Activated CD8-positive, alpha-beta memory T cell treated with anti-CD3 and anti-CD28 coated beads, Interleukin-2, amount 10 ng/mL, durations not matched to agents 7 days and 5 days (primary cell): ENCODE measurements at regions of chr19 and their contacts with region 1.

Region 1: DNA sequence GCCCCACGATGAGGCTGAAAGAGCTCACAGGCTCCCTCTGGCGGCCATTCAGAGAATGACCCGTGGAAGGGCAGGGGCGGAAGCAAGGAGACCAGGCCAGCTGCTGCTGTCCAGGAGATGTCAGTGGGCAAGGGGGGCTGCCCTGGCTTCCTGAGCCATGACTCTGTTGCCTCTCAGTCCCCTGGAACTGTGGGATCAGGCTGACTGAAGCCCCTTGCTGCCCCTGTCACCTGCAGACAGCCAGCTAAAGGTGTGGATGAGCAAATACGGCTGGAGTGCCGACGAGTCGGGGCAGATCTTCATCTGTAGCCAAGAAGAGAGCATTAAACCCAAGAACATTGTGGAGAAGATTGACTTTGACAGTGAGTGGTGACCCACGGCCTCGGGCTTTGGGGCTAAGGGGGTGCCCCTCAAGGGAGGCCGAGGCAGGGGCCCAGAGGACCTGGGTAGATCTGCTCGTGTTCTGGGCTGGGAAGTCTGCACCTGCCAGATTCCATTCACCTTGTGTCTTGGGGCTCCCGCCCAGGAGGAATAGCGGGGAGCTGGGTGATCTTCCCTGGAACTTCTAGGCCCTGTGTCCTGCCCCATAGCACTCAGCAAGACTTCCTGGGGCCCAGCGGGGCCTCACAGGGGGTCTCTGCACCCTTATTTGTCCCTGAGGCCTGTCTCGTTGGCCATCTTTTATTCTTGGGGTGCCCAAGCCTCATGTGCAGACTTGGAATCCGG is 12.5 kb upstream of the ACTN4 start:
- DNase-seq: peak; percentile 83
- ATAC-seq: no peak
- H3K4me3 Mint-ChIP-seq: no peak overlapping the region
- H3K27ac Mint-ChIP-seq: peak overlapping the region; percentile 80
- H3K4me1 Mint-ChIP-seq: peaks cover 42% of the 10 kb centered on the region
- H3K27me3 Mint-ChIP-seq: no peaks in the 10 kb centered on the region

Region 2: GRCh38 chr19:38402967-38403861 is 231.7 kb before region 1 on chr19 and contains the start of gene FAM98C:
- CTCF ChIA-PET with region 1: interaction called, 57 read pairs
- DNase-seq: peak; percentile 98
- ATAC-seq: peak; percentile 98
- H3K4me3 Mint-ChIP-seq: peak within 1 kb of the TSS; percentile 77
- H3K27ac Mint-ChIP-seq: peak within 1 kb of the TSS; percentile 90
- H3K4me1 Mint-ChIP-seq: peaks cover 13% of the 10 kb centered on the region
- H3K27me3 Mint-ChIP-seq: peaks cover 8% of the 10 kb centered on the region
- total RNA-seq, gene FAM98C: 22.4 to 24.1 TPM

Region 3: DNA sequence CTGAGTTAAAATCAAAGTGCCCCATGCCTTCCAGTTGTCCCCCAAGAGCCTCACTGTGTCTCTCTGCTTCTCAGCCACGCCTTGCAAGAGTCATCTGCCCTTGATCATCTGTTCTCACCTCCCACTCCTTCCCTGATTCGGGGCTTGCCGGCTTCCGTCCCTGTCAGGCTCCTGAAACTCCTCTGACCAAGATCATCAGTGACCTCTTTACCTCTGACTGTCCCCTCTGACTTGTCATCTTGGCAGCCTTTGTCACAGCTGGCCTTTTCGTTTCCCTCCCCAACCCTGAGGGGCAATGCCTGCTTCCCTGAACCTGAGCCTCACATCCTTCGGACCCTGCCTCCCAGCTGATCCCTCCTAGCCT is 83.5 kb before region 1 on chr19:
- CTCF ChIA-PET with region 1: interaction called, 72 read pairs
- DNase-seq: peak; percentile 68
- ATAC-seq: peak; percentile 63
- H3K4me3 Mint-ChIP-seq: no peak overlapping the region
- H3K27ac Mint-ChIP-seq: peak overlapping the region; percentile 27
- H3K4me1 Mint-ChIP-seq: peaks cover 33% of the 10 kb centered on the region
- H3K27me3 Mint-ChIP-seq: peaks cover 4% of the 10 kb centered on the region

Region 4: DNA sequence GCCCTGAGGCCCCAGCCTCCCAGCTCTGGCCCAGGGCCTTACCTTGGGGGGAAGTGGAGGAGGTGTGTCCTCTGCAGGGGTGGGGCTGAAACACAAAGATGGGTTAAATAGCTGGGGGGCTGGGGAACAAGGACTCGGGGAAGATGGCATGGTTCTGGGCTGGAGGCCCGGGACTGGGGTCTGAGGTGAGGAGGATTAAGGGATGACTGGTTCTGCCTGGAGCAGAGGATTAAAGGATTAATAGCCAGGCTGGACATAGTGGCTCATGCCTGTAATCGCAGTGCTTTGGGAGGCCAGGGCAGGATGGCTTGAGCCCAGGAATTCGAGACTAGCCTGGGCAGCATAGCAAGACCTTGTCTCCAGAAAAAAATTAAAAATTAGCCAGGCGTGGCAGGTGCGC is 28.8 kb before region 1 on chr19:
- CTCF ChIA-PET with region 1: no interaction called
- DNase-seq: no peak
- ATAC-seq: no peak
- H3K4me3 Mint-ChIP-seq: no peak overlapping the region
- H3K27ac Mint-ChIP-seq: no peak overlapping the region
- H3K4me1 Mint-ChIP-seq: peaks cover 2% of the 10 kb centered on the region
- H3K27me3 Mint-ChIP-seq: no peaks in the 10 kb centered on the region

Region 5: GRCh38 chr19:38624822-38625221 is 10.1 kb before region 1 on chr19:
- CTCF ChIA-PET with region 1: interaction called, 93 read pairs
- DNase-seq: no peak
- ATAC-seq: no peak
- H3K4me3 Mint-ChIP-seq: no peak overlapping the region
- H3K27ac Mint-ChIP-seq: no peak overlapping the region
- H3K4me1 Mint-ChIP-seq: peaks cover 13% of the 10 kb centered on the region
- H3K27me3 Mint-ChIP-seq: no peaks in the 10 kb centered on the region

Region 6: DNA sequence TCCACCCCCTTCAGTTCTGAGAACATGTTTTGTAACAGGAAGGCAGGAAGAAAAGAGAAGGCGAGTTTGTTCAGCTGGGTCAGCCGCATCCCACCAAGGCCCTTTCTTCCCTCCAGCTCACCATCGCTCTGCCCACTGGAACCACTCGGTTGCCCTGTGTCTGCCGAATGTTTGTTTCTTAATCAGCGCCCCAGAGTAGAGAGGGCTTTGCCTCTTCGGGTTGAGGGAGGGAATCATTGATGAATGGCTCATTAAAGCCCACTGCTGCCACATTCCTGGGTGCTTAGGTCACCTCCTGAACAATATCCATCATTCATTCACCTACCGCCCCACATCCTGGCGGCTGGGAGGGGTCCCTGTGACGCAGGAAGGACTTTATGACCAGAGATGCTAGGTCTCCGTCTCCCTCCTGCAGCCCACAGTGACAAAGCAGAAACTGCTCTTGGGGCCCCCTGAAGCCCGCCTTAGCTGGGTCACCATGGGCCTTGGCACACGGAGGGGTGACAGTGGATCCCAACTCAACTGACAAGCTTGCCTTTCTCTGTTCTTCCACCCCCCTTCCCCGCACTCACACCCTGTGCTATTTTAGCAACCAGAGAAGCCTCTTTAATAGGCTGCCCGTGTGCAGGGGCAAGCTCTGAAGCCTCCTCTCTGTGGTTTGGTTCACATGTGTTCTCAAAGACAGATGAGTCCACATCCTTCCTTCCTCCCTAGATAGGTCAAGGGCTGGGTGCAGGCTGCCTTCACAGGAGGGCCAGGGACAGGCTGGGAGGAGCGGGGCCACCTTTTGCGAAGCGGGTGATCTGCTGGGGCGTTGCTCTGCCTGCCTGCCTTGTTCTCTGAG is 58.7 kb after region 1 on chr19:
- CTCF ChIA-PET with region 1: interaction called, 12 read pairs
- DNase-seq: peak; percentile 81
- ATAC-seq: peak; percentile 93
- H3K4me3 Mint-ChIP-seq: peak overlapping the region; percentile 44
- H3K27ac Mint-ChIP-seq: peak overlapping the region; percentile 90
- H3K4me1 Mint-ChIP-seq: peaks cover 93% of the 10 kb centered on the region
- H3K27me3 Mint-ChIP-seq: no peaks in the 10 kb centered on the region

Region 7: GRCh38 chr19:38891771-38892170 is 256.9 kb after region 1 on chr19:
- CTCF ChIA-PET with region 1: interaction called, 11 read pairs
- DNase-seq: no peak
- ATAC-seq: no peak
- H3K4me3 Mint-ChIP-seq: no peak overlapping the region
- H3K27ac Mint-ChIP-seq: no peak overlapping the region
- H3K4me1 Mint-ChIP-seq: no peaks in the 10 kb centered on the region
- H3K27me3 Mint-ChIP-seq: no peaks in the 10 kb centered on the region